Head of caudate nucleus (tissue), 42 donors: ENCODE measurements at regions of chr6 and their contacts with region 1.

Region 1: DNA sequence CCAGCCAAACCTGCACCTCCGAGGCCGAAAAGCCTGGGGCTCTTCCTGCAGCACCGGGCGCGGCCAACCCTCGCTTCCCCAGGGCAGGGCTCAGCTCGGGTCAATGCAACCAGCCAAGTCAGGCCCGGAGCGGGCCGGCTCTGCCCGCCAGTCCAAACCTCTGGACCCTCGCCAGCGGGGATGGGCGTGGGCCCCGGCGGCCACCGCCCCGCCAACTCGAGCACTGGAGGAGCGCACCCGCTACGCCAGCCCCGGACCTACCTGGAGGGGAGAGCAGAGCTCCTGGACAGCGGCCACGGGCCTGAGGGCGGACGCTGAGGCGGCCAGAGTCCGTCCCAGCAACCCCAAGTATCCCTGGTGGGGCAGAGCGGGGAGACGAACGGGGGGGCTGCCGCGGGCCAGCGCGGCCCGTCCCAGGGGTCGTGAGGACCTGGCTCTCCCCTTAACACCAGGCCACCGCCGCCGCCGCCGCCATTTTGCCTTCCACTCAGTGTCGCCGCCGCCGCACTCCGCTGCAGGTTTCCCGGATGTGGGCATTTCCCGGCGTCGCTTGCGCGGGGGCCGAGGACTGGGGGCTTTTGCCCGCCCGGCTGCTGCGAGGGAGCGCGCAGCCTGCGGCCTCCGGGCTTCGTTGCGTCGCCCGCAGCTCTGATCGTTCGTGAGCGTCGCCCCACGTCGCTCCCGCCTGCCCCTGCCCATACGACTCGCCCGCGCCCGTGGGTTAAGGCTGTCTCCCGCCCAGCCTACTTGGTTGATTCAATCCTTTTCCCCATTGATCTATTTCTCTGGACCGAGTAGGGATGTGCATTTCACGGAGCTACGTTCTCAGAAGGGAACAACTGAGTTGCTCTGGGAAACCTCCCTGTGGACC is at the start of gene LATS1:
- DNase-seq: peak; percentile 78 to 98 (median 94)

Region 2: GRCh38 chr6:149545754-149546528 is 171.9 kb before region 1 on chr6 and contains the start of gene PPIL4:
- intact Hi-C with region 1: loop called (anchors 5 kb)
- DNase-seq: peak; percentile 83 to 98 (median 96)

Region 3: DNA sequence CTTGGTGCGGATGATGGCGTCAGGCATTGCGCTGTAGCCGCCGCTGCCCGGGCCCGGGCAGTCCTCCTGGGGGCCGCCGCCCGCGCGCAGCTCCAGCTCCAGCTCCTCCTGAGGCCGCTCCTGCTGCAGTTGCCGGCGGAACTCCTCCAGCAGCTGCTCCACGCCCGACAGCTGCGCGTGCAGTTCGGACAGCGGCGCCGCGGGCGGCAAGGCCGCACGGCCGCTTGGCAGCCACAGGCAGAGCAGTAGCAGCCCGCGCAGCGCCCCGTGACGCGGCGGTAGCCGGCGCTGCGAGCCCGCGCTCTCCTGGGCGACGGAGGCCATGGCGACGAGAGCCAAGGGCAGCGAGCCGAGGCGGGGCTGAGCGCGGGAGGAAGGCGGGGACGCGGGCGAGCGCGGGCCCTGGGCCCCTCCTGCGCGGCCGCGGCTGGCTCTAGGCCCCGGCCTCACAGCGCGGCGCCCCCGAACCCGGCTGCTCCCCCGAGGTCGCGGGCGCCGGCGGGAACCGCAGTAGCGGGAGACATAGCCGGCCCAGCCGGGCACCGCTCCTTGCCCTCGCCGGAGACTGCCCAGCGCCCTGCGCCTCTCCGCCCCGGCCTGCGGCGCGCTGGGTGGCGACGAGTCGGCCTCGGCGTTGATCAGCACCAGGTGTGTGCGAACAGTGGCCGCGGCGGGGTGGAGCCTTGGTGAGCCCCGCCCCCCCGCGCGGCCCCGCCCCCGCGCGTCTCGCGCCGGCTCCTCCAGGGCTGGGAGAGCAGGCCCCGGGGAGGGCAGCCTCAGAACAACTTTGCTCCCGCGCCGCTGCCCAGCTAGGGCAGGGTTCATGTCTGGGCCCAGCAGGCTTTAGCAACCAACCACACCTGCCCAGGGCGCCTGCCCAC is 146.1 kb after region 1 on chr6 and contains the start of gene LRP11:
- intact Hi-C with region 1: loop called (anchors 5 kb)
- DNase-seq: peak; percentile 66 to 96 (median 89)

Region 4: GRCh38 chr6:150243620-150244314 is 525.9 kb after region 1 on chr6:
- intact Hi-C with region 1: no loop called
- DNase-seq: no peak